GM13977 (cell line): ENCODE measurements at regions of chr7 and their contacts with region 1.

Region 1: GRCh38 chr7:26376175-26376917 is 84.7 kb downstream of the SNX10 start:
- DNase-seq: peak; percentile 69
- CTCF ChIP-seq: no peak

Region 2: GRCh38 chr7:25742316-25742715 is 634.0 kb before region 1 on chr7:
- in situ Hi-C with region 1: no loop called
- DNase-seq: no peak
- CTCF ChIP-seq: no peak

Region 3: DNA sequence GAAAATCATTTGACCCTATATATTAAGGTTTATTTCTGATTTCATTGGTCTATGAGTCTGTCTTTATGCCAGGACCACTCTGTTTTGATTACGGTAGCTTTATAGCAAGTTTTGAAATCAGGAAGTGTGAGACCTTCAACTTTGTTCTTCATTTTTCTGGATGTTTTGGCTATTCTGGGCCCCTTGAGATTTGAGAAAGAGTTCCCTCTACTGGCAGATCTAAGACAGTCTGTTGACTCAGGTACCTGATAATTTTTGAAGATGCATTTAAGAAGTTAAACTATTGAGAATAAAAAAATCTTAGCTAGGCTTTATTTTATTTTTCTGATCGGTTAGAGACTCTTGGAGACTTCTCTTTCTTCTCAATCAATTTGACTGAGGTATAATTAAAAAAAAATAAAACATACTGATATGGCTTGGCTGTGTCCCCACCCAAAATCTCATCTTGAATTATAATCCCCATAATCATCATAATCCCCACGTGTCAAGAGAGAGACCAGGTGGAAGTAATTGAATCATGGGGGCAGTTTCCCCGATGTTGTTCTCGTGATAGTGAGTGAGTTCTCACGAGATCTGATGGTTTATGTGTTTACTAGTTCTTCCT is 124.5 kb after region 1 on chr7:
- in situ Hi-C with region 1: loop called (anchors 10 kb)
- DNase-seq: peak; percentile 61
- CTCF ChIP-seq: peak; percentile 71

Region 4: DNA sequence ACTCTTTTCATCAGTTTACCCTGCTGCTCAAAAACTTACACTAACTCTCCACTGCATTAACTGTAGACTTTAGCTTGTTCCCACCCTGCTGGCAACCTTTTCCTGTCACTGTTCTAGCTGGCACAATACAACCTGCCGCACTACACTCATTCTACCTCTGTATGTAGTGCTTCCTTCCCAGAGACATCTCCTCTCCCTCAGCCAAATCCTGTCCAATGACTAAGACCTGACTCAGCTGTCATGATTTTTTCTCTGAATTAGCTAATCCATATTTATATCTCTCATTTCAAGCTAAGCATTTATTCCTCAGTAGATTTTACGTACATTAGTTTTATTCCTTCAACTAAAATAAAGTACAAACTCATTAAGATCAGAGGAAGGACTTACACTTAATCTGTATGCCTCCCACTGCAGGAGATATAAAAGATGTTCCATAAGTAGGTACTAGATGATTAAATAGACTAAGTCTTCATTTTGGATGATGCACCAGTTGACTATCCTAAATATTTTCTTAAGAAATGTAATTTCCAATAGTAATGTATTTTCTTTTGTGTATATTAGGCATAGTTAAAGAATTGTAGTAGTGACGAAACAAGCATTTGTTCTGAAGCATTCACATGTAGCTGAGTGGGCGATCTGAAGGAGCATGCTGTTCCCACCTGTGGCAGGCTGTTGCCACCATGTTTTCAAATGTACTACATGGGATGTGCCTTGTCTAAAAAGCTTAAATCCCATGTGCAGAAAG is 299.0 kb after region 1 on chr7:
- in situ Hi-C with region 1: loop called (anchors 10 kb)
- DNase-seq: no peak
- CTCF ChIP-seq: no peak